PC-9 (cell line): ENCODE measurements at regions of chr17 and their contacts with region 1.

Region 1: DNA sequence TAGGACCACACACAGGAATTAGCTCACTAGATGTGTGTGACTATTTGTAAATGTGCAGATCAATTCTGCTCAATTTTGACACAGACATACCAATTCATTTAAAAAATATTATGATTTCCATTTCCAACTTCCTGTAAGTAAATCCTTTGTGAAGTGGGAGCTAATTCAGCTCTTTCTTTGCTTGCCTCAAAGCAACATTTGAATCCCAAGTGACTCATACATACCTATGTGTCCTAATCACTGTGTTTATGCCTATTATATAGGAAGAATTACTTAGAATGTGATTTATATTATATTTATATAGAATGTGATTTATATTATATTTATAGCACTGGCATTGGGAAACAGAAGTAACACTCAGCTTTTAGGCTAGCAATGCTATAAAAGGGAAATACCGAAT is 195.9 kb upstream of the C17orf78 start:
- DNase-seq: peak in 1 of 2 experiments; percentile 90
- H3K4me3 ChIP-seq: no peak overlapping the region
- H3K27ac ChIP-seq: peak overlapping the region; percentile 81
- H3K4me1 ChIP-seq: peaks cover 37% of the 10 kb centered on the region
- H3K27me3 ChIP-seq: no peaks in the 10 kb centered on the region
- CTCF ChIP-seq: no peak

Region 2: DNA sequence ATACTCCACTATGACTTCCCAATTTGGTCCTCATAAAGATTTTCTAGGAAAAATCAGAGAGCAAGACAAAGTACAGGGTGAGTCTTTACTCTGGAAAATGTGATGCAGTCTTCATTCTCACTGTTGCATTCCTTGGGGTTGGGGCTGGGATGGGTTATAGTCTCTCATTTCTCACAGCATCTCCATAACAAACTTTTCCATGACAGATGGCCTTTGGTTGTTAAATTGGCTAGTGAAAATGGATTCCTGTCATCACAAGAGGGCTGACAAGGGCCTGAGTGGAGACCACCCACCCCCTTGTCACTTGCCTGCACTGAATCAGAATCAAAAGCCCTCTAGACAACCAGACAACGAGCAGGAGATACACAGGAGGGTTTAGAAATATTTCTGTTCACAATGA is 56.5 kb before region 1 on chr17:
- CTCF ChIA-PET with region 1: no interaction called
- POLR2A ChIA-PET with region 1: interaction called, 25 read pairs
- intact Hi-C with region 1: no loop called
- DNase-seq: no peak
- H3K4me3 ChIP-seq: no peak overlapping the region
- H3K27ac ChIP-seq: no peak overlapping the region
- H3K4me1 ChIP-seq: no peaks in the 10 kb centered on the region
- H3K27me3 ChIP-seq: no peaks in the 10 kb centered on the region
- CTCF ChIP-seq: no peak

Region 3: GRCh38 chr17:37190493-37190892 is 10.6 kb after region 1 on chr17:
- CTCF ChIA-PET with region 1: interaction called, 14 read pairs
- POLR2A ChIA-PET with region 1: interaction called, 5 read pairs
- intact Hi-C with region 1: no loop called
- DNase-seq: no peak
- H3K4me3 ChIP-seq: no peak overlapping the region
- H3K27ac ChIP-seq: no peak overlapping the region
- H3K4me1 ChIP-seq: no peaks in the 10 kb centered on the region
- H3K27me3 ChIP-seq: no peaks in the 10 kb centered on the region
- CTCF ChIP-seq: no peak; the same call in 1 of the 2 replicates

Region 4: DNA sequence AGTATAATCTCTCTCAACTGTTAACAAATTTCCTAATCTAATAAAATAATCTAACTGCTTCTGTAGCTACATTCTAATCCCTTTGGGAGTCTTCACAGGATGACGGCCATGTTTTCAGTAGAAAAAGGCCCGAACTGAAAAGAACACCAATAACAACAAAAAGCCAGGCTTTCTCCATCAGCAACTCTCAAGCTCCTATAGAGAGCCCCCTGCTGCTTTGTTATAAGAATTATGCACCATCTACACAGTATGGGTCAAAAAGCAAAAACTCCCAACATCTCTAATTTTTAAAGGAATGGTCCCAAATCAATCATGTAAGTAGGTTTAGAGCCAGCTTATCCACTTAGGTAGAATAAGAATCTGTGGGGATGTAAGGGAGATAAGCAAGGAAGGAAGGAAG is 32.3 kb after region 1 on chr17:
- CTCF ChIA-PET with region 1: no interaction called
- POLR2A ChIA-PET with region 1: no interaction called
- intact Hi-C with region 1: no loop called
- DNase-seq: no peak
- H3K4me3 ChIP-seq: no peak overlapping the region
- H3K27ac ChIP-seq: no peak overlapping the region
- H3K4me1 ChIP-seq: no peaks in the 10 kb centered on the region
- H3K27me3 ChIP-seq: no peaks in the 10 kb centered on the region
- CTCF ChIP-seq: no peak

Region 5: DNA sequence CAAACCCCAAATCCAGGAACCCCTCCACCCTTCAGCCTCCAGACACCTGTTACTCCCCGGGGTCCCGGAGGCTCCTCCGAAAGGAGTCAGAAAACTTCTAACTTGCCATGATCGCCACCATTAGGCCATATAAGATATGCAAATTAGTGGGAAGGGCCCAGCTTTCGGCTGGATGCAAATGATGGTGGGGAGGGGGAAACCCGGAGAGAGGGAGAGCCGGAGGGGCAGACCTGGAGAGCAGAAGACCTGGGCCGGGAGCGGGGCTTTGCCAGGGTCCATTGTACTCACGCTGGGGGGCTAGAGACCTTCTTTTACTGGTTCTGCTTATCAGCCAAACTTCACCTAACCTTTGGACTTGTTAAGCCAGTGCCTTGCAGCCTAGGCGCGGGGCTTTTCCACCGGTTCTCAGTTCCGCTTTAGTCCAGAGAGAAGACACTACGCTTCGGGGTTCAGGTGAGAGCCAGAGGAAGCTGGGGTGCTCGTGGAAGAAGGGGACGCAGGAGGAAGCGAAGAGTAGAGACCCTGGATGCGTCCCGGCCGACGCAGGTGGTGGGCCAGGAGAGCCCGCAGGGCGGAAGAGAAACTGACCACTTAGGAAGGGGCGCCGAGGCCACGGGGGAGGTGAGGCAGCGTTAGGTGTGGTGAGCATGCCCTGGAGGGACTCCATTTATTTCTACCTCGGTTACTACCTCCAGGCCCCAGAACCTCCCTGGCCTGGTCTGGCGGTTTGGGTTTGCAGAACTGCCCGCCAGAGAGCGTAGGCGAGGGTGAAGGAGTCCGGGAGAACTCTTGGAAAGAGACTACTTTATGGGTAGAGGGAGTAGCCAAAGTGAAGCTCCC is 565.3 kb after region 1 on chr17 and contains the start of gene HNF1B:
- CTCF ChIA-PET with region 1: no interaction called
- POLR2A ChIA-PET with region 1: no interaction called
- intact Hi-C with region 1: no loop called
- DNase-seq: no peak
- H3K4me3 ChIP-seq: no peak within 1 kb of the TSS
- H3K27ac ChIP-seq: no peak within 1 kb of the TSS
- H3K4me1 ChIP-seq: no peaks in the 10 kb centered on the region
- H3K27me3 ChIP-seq: peaks cover 33% of the 10 kb centered on the region
- CTCF ChIP-seq: no peak
- total RNA-seq, gene HNF1B: not detected in 2 replicates